BJ (cell line): ENCODE measurements at regions of chr20 and their contacts with region 1.

Region 1: GRCh38 chr20:47379433-47380150 is 23.1 kb upstream of the ZMYND8 start:
- DNase-seq: no peak
- H3K4me3 ChIP-seq: no peak overlapping the region
- H3K27me3 ChIP-seq: no peaks in the 10 kb centered on the region
- CTCF ChIP-seq: no peak

Region 2: DNA sequence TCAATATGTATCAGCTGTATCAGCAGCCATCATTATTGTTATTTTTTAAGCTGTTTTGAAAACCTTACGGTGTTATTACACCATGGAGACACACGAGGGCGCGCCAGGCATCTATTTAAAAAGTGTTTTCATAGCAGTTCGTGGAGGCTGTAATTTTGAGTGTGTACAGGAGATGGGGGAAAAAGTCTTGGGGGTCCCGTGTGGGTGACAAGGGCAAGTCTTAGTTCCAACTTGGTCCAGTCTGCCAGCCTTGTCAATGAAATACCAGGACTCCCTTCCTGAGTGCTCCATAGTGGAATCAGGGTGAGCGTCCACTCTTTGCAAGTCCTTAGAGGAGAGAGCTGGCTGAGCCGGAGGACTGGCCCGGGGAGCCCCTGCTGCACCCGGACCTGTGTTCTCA is 626.9 kb before region 1 on chr20:
- CTCF ChIA-PET with region 1: interaction called, 11 read pairs
- POLR2A ChIA-PET with region 1: no interaction called
- DNase-seq: no peak
- H3K4me3 ChIP-seq: no peak overlapping the region
- H3K27me3 ChIP-seq: no peaks in the 10 kb centered on the region
- CTCF ChIP-seq: peak; percentile 74

Region 3: DNA sequence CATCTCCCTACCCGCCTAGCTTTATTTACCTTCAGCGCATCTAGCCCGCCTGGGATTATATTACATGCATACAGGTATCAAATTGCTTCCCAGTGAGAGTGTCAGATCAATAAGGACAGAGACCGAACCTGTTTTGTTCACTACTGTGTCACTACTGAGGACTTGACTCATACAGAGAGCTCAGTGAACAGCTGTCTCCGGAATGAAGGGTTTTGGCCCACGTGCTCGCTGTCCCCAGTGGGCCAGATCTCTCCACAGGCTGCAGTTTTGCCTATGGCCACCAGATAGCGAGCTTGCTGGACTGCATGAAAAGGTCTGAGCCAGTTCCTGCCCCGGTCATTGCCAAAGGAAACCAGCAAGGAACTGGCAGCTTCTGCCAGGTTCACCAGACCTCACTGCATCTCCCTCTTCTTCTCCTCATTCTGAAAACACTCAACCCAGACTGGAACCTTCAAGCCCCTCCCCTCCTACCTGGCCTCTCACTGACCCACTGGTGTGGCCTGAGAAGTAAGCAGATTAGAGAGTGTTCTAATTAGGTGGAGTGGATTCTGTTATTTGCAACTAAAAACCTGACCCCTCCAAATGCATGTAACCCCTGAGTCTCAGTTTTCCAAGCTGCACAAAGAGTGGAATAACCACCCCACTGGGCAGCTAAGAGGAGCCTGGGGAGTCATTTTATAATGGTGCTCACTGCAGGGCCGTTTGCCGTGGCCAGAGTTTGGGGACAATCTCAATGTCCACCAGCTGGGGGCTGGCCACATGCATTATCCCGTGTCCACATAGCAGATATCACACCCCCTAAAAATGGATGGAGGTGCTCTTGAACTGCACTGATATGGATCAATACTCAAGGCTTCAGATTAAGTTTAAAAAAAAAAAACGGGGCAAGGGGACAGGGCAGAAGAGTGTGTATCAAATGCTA is 173.8 kb before region 1 on chr20:
- CTCF ChIA-PET with region 1: interaction called, 68 read pairs
- POLR2A ChIA-PET with region 1: no interaction called
- DNase-seq: no peak
- H3K4me3 ChIP-seq: no peak overlapping the region
- H3K27me3 ChIP-seq: no peaks in the 10 kb centered on the region
- CTCF ChIP-seq: peak; percentile 92

Region 4: DNA sequence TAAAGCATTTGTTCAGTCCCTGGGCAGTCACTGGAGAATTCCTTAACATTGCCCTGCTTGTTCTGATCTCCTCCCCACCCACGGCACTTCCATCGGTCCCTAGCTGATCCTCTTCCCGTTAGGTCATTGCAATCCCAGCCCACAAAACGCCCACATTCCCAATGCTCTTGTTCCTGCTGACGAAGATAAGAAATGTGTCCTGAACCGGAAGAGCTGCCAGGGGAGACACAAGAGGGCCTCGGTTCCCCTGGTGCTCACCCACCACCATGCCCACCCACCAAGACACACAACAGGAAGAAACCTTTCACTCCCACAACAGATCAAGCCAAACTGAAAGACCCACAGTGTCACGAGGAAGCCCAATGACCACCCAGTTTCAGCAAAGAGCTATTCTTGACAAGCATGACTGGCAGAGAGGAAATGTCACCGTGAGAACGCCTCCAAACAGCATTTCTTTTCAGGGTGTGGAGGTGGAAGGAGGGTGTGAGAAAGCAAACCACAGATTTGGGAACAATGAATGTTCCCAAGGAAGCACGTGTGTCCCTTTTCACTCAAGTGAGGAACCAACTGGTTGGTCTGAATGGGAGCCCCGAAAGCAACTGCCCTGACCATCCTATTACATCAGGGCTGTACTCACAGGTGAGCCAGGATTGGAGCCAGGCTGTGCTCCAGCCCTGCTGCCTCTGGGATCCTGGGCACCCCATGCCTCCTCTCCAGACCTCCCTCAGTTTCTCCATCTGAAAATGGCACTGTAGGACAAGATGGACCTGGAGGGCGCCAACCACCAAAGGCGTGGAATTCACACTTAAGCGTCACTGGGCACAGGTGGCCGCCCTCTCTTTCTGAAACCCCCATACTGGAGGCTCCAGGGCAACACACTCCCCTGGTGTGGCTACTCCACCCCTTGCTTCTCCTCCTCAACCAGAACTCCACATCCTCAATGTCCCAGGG is 120.6 kb before region 1 on chr20:
- CTCF ChIA-PET with region 1: interaction called, 20 read pairs
- POLR2A ChIA-PET with region 1: no interaction called
- DNase-seq: no peak
- H3K4me3 ChIP-seq: no peak overlapping the region
- H3K27me3 ChIP-seq: no peaks in the 10 kb centered on the region
- CTCF ChIP-seq: no peak

Region 5: GRCh38 chr20:47278563-47279348 is 100.8 kb before region 1 on chr20:
- CTCF ChIA-PET with region 1: interaction called, 321 read pairs
- POLR2A ChIA-PET with region 1: interaction called, 4 read pairs
- DNase-seq: no peak
- H3K4me3 ChIP-seq: no peak overlapping the region
- H3K27me3 ChIP-seq: no peaks in the 10 kb centered on the region
- CTCF ChIP-seq: no peak

Region 6: DNA sequence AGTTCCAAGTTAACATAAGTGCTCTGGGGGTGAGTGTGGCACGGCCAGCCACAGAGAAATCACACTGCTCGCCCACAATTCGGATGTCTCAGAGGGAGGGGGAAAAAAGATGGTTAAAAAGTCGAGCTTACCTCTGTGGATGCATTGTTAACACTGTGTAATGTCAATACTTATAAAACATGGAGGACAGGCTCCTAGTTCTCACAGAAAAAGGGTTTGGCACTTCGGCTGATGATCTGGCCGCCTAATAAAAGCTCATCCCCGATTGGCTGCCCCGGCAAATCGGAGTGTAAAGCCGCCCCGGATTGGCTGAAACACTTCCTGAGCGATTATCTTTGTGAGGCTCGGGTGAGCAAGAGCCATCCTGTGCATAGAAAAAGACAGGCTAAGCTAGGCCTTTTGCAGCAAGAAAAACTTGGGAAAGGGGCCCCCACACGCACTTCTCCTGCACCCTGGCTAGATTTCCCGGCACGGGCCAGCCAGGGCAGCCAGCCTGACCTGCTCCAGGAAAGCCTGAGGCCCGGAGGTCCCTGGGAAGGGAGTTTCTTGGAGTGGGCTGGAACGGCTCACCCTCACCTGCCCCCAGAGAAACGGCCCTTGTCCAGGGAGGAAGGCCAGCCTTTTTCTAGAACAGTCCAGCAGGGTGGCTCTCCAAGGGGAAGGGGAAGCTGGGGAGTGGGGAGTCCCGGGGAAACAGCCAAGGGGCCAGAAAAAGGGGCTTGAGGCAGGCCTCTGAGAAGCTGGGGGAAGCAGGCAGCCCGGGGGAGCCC is 22.9 kb before region 1 on chr20 and contains the start of gene ZMYND8:
- CTCF ChIA-PET with region 1: interaction called, 68 read pairs
- POLR2A ChIA-PET with region 1: interaction called, 12 read pairs
- DNase-seq: peak; percentile 76
- H3K4me3 ChIP-seq: no peak within 1 kb of the TSS
- H3K27me3 ChIP-seq: no peaks in the 10 kb centered on the region
- CTCF ChIP-seq: no peak
- polyA plus RNA-seq, gene ZMYND8: 11.8 and 12.7 TPM in 2 replicates

Region 7: DNA sequence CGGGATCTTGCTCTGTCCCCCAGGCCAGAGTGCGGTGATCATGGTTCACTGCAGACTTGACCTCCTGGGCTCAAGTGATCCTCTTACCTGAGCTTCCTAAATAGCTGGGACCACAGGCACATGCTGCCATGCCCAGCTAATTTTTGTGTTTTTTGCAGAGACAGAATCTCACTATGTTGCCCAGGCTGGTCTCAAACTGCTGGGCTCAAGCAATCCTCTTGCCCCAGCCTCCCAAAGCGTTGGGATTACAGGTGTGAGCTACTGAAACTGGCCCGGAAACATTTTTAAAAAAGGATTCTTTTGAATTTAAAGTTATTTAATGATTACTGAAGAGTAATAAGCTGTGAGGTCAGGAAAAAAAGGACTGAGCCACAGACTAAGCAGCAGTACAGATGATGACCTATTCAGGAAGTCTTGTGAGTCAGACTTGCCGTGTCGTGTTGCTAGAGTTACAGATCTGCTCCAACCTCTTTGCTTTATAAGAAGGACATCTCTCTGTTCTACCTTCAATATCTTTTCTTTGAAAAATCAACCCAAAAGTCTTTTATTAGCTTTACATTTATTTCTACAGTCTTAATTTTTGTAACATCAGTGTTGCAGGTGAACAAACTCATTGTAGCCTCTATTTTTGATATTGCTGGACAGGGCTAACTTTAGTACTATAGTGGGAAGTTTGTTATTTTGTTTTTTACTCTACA is 230.8 kb after region 1 on chr20:
- CTCF ChIA-PET with region 1: interaction called, 11 read pairs
- POLR2A ChIA-PET with region 1: no interaction called
- DNase-seq: peak; percentile 46
- H3K4me3 ChIP-seq: no peak overlapping the region
- H3K27me3 ChIP-seq: no peaks in the 10 kb centered on the region
- CTCF ChIP-seq: no peak